ENCODE measurements at regions of chr22 and their contacts with region 1.

Region 1: GRCh38 chr22:32426156-32426555 is 14.1 kb upstream of the RTCB start:
- DNase-seq: no peak
- H3K4me3 ChIP-seq: no peak overlapping the region
- H3K27ac ChIP-seq: no peak overlapping the region
- H3K4me1 ChIP-seq: no peaks in the 10 kb centered on the region
- H3K27me3 ChIP-seq: peaks cover 68% of the 10 kb centered on the region
- CTCF ChIP-seq: no peak

Region 2: DNA sequence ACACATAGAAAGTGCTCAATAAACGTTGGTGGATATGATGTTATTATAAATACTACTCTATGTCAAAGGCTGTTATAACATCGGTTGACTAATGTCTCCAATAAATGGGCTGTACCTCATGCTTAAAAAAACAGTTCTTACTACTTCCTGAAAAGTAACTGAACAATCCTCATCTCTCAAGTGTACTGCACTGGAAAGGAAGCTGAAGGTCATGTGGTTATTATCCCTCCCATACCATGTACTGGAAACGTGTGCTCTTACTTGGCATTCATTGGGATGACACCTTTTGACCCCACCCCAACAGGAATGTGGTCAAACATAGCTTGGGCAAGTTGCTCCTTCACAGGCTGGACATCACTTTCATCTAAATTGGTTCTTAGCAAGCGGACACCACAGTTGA is 24.7 kb before region 1 on chr22:
- CTCF ChIA-PET with region 1: no interaction called
- POLR2A ChIA-PET with region 1: no interaction called
- intact Hi-C with region 1: no loop called
- DNase-seq: no peak
- H3K4me3 ChIP-seq: no peak overlapping the region
- H3K27ac ChIP-seq: no peak overlapping the region
- H3K4me1 ChIP-seq: no peaks in the 10 kb centered on the region
- H3K27me3 ChIP-seq: no peaks in the 10 kb centered on the region
- CTCF ChIP-seq: no peak

Region 3: DNA sequence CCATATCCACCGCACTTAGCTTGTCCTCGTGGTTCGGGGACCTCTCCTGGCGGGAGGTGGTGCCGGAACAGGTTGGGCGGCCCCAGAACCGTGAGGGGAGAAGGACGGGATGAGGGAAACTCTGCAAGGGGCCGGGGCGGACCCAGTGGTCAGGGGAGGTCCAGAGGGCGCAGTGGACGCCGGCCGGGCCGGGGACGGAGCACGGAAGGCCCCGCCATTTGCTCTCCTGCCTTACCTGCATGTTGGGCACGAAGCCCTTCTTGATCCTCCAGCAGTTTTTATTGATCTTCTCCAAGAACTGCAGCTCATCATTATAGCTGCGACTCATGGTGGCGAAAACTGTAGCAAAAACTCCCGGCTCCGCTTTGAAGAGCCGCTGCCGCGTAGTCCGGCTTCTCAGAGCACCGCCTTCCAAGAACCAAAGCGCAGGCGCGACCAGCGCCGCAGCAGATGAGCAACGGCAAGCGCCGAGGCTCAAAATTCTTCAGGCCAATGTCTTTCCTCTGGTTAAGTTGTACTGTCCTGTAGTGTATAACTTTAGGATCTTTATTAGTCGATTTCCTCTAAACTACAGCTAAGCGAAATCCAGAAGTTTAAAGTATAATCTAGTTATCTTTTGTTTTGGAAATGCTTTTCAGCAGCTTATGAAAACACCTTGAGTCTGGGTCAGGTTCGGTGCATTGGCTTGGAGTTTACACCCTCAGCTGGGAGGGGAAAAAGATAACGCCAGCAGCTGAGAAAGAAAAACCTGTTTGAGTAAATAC is 14.1 kb before region 1 on chr22 and contains the start of gene RTCB:
- CTCF ChIA-PET with region 1: interaction called, 11 read pairs
- POLR2A ChIA-PET with region 1: no interaction called
- intact Hi-C with region 1: no loop called
- DNase-seq: peak; percentile 80 to 89
- H3K4me3 ChIP-seq: peak within 1 kb of the TSS; percentile 72
- H3K27ac ChIP-seq: peak within 1 kb of the TSS; percentile 59
- H3K4me1 ChIP-seq: peaks cover 17% of the 10 kb centered on the region
- H3K27me3 ChIP-seq: peaks cover 16% of the 10 kb centered on the region
- CTCF ChIP-seq: no peak
- total RNA-seq, gene RTCB: 75.9 and 76.5 TPM in 2 replicates

Region 4: DNA sequence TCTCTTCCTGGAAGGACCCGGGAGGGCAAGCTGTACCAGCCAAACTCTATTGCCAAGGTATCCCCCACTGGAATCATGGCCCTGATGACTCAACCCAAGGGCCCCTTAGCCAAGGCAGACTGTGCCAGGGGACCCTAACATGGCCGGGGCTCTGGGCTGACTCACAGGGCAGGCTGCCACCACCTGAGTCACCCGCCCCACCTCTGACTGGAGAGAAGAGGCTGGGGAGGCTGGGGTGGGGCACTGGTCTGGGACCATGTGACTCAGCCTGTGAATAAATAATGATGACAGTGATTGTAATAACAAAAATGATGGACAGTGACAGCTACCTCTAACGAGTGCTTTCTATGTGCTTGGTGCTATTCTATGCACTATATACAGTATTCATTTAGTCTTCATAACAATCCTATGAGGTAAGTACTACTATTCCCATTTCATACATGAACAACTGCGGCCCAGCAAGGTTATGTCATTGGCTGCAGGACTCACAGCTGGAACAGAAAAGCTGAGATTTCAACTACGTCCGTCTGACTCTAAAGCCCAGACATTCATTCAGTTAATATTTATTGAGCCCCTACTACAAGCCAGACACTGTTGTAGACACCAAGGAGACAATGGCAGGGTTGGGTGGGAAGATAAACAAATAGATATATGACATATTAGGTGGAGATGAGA is 132.7 kb after region 1 on chr22:
- CTCF ChIA-PET with region 1: no interaction called
- POLR2A ChIA-PET with region 1: no interaction called
- intact Hi-C with region 1: no loop called
- DNase-seq: peak; percentile 91 to 94
- H3K4me3 ChIP-seq: no peak overlapping the region
- H3K27ac ChIP-seq: peak overlapping the region; percentile 81
- H3K4me1 ChIP-seq: peaks cover 65% of the 10 kb centered on the region
- H3K27me3 ChIP-seq: no peaks in the 10 kb centered on the region
- CTCF ChIP-seq: no peak

Region 5: GRCh38 chr22:32957200-32957803 is 531.1 kb after region 1 on chr22:
- CTCF ChIA-PET with region 1: no interaction called
- POLR2A ChIA-PET with region 1: no interaction called
- intact Hi-C with region 1: no loop called
- DNase-seq: no peak
- H3K4me3 ChIP-seq: no peak overlapping the region
- H3K27ac ChIP-seq: no peak overlapping the region
- H3K4me1 ChIP-seq: no peaks in the 10 kb centered on the region
- H3K27me3 ChIP-seq: peaks cover 11% of the 10 kb centered on the region
- CTCF ChIP-seq: no peak